ENCODE measurements at regions of chr1 and their contacts with region 1.

Region 1: GRCh38 chr1:235415008-235415904 is 48.0 kb downstream of the TBCE start:
- DNase-seq: peak; percentile 66
- H3K4me3 Mint-ChIP-seq: no peak overlapping the region
- H3K27ac Mint-ChIP-seq: no peak overlapping the region
- H3K4me1 Mint-ChIP-seq: peaks cover 2% of the 10 kb centered on the region
- H3K27me3 Mint-ChIP-seq: no peaks in the 10 kb centered on the region

Region 2: DNA sequence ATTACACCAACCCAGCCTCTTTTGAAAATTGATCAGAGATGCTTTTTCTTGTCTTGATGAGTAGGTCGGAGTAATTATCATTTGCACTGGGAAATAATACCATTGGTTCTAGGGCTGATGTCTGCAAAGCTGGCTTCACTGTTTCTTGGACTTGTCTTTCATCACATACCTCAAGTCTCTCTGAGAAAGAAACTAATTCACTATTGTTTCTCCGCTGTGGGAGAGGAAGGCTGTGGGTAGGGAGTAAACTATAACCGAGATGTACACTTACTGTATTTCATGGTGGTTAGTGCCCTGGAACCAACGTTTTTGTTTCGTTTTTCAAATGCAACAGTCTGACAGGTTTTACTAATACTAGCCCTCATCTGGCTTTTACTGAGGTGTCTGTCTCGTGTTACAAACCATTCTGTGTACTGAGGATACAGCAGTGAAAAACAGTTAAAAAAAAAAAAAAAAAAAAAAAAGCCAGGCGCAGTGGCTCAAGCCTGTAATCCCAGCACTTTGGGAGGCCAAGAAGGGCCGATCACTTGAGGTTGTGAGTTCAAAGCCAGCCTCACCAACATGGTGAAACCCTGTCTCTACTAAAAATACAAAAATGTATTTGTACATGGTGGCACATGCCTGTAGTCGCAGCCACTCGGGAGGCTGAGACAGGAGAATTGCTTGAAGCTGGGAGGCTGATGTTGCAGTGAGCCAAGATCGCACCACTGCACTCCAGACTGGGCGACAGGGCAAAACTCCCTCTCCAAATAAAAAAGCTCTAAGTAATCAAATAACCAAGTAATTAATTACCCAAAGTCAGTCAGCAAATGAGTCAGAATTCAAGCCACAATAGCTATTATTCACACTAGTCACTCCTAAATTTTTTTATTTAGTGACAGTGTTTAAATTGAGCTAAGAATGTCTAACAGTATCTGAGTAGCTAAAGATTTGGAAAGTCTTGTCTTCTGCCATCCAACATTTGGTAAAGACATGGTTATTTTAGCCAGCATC is 309.9 kb before region 1 on chr1:
- CTCF ChIA-PET with region 1: interaction called, 41 read pairs
- POLR2A ChIA-PET with region 1: interaction called, 9 read pairs
- DNase-seq: peak; percentile 44
- H3K4me3 Mint-ChIP-seq: peak overlapping the region; percentile 60
- H3K27ac Mint-ChIP-seq: peak overlapping the region; percentile 85
- H3K4me1 Mint-ChIP-seq: peaks cover 42% of the 10 kb centered on the region
- H3K27me3 Mint-ChIP-seq: peaks cover 8% of the 10 kb centered on the region

Region 3: GRCh38 chr1:235239851-235240250 is 175.4 kb before region 1 on chr1:
- CTCF ChIA-PET with region 1: interaction called, 32 read pairs
- POLR2A ChIA-PET with region 1: no interaction called
- DNase-seq: no peak
- H3K4me3 Mint-ChIP-seq: no peak overlapping the region
- H3K27ac Mint-ChIP-seq: peak overlapping the region; percentile 37
- H3K4me1 Mint-ChIP-seq: peaks cover 34% of the 10 kb centered on the region
- H3K27me3 Mint-ChIP-seq: no peaks in the 10 kb centered on the region

Region 4: DNA sequence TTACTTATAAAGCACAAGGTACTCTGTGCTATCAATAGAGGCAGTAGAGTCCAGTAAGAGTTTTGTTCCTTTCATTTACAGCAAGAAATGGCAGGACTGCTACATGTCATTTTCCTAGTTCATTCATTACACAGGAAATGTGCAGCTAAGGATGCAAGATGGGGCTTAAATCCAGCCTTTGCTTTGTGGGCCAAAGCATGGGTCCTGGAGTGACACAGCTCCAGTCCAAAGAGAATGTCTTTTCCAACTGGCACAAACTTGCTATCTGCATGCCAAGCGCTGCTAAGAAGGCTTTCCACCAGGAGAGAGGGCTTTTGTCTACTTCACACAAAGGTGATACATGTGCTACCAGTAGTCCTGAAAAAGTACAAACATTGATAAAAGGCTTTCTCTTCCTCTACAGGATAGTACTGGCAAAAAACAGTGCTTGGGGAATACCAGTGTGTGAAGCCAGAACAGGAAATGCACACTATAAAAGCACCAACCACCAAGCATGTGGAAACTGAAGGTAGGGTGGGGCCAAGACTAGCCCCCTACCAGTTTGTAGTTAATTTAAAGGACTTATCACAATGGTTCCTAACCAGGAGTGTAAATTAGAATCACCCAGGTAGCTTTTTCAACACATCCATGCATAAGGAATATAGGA is 156.0 kb before region 1 on chr1:
- CTCF ChIA-PET with region 1: interaction called, 30 read pairs
- POLR2A ChIA-PET with region 1: no interaction called
- DNase-seq: no peak
- H3K4me3 Mint-ChIP-seq: no peak overlapping the region
- H3K27ac Mint-ChIP-seq: peak overlapping the region; percentile 26
- H3K4me1 Mint-ChIP-seq: peaks cover 29% of the 10 kb centered on the region
- H3K27me3 Mint-ChIP-seq: no peaks in the 10 kb centered on the region

Region 5: GRCh38 chr1:235339746-235340445 is 75.4 kb before region 1 on chr1:
- CTCF ChIA-PET with region 1: interaction called, 10 read pairs
- POLR2A ChIA-PET with region 1: no interaction called
- DNase-seq: no peak
- H3K4me3 Mint-ChIP-seq: no peak overlapping the region
- H3K27ac Mint-ChIP-seq: no peak overlapping the region
- H3K4me1 Mint-ChIP-seq: peaks cover 21% of the 10 kb centered on the region
- H3K27me3 Mint-ChIP-seq: no peaks in the 10 kb centered on the region

Region 6: DNA sequence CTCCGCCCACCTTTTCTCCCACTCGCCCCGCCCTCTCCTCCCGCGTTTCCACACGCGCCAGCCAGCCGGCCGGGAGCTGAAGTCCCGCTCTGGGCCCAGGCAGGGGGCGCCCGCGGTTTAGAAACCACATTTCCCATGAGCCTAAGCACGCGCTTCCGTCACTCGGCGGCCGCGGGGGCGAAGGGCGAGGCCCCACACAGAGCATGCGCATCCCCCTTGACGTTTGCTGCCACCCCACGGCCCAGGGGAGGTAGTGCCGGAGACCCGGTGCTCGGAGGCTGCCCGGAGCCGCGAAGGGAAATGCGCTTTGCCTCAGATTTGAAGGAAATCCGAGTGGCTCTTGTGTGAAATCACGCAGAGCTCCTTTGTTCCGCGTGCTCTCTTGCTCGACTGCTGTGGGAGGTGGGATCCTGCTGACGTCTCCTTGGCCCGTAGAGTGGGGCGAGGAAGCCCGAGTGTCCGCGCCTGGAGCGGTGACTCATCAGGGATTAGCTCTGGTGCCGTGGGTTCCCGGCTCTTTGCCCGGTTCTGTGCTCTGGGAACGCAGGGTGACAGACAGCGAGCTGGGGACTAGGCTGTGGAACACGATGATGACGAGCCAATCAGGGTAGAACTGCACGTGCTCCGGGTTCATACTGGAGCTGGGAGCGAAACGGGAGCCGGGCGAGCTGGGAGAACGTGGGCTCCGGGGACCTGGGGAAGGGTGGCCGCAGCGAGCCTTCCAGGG is 89.4 kb after region 1 on chr1:
- CTCF ChIA-PET with region 1: interaction called, 11 read pairs
- POLR2A ChIA-PET with region 1: no interaction called
- DNase-seq: peak; percentile 99
- H3K4me3 Mint-ChIP-seq: peak overlapping the region; percentile 94
- H3K27ac Mint-ChIP-seq: peak overlapping the region; percentile 98
- H3K4me1 Mint-ChIP-seq: peaks cover 26% of the 10 kb centered on the region
- H3K27me3 Mint-ChIP-seq: peaks cover 5% of the 10 kb centered on the region

Measured in activated CD4-positive, alpha-beta memory T cell treated with anti-CD3 and anti-CD28 coated beads, Interleukin-2, amount 10 ng/mL, durations not matched to agents 7 days and 5 days (primary cell).